ENCODE measurements at regions of chr11 and their contacts with region 1.

Region 1: GRCh38 chr11:15923183-15923582 is 433.2 kb downstream of the SOX6 start:
- DNase-seq: peak; percentile 44
- H3K4me3 ChIP-seq: no peak overlapping the region
- H3K27ac ChIP-seq: no peak overlapping the region
- H3K4me1 ChIP-seq: peaks cover 0 to 4% of the 10 kb centered on the region in 2 experiments; a peak in 1 of 4 replicates
- H3K27me3 ChIP-seq: no peaks in the 10 kb centered on the region
- CTCF ChIP-seq: no peak
- EP300 ChIP-seq: no peak
- RAD21 ChIP-seq: peak; percentile 60

Region 2: DNA sequence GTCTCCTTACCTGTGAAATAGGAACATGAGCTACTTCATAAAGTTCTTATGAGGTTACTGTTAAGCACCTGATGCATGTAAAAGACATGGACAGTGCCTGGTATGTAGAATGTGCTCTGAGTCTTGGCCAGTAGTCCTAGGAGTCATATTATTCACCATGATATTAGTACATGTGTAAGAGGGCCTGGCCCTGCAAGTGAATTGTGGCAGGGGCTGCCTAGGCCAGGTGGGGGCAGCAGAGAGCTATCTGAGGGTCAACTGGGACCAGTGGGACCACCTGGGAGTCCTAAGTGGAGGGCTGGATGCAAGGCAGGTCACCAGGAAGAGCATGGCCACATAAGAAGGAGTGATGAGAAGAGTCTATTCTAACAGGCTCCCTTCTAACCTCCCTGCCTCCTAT is 96.4 kb before region 1 on chr11:
- CTCF ChIA-PET with region 1: interaction called, 14 read pairs
- POLR2A ChIA-PET with region 1: no interaction called
- DNase-seq: peak; percentile 63
- H3K4me3 ChIP-seq: no peak overlapping the region
- H3K27ac ChIP-seq: no peak overlapping the region; a peak in 1 of 4 replicates
- H3K4me1 ChIP-seq: peaks cover 0 to 11% of the 10 kb centered on the region in 2 experiments; a peak in 1 of 4 replicates
- H3K27me3 ChIP-seq: no peaks in the 10 kb centered on the region; the same call in 1 of the 2 replicates
- CTCF ChIP-seq: peak; percentile 61
- EP300 ChIP-seq: no peak
- RAD21 ChIP-seq: peak; percentile 86

Region 3: GRCh38 chr11:15911377-15912044 is 11.7 kb before region 1 on chr11:
- CTCF ChIA-PET with region 1: interaction called, 10 read pairs
- POLR2A ChIA-PET with region 1: no interaction called
- DNase-seq: no peak
- H3K4me3 ChIP-seq: no peak overlapping the region
- H3K27ac ChIP-seq: no peak overlapping the region
- H3K4me1 ChIP-seq: peaks cover 0 to 8% of the 10 kb centered on the region in 2 experiments; a peak in 1 of 4 replicates
- H3K27me3 ChIP-seq: no peaks in the 10 kb centered on the region
- CTCF ChIP-seq: no peak
- EP300 ChIP-seq: no peak
- RAD21 ChIP-seq: no peak

Region 4: GRCh38 chr11:16001899-16002426 is 78.8 kb after region 1 on chr11:
- CTCF ChIA-PET with region 1: no interaction called
- POLR2A ChIA-PET with region 1: no interaction called
- DNase-seq: no peak
- H3K4me3 ChIP-seq: 0 out of 4 replicates have a peak overlapping the region, but pooled peaks of 1 of the 2 experiments have one; percentile 14
- H3K27ac ChIP-seq: peak overlapping the region in 1 of 2 experiments; percentile 14; a peak in 2 of 4 replicates
- H3K4me1 ChIP-seq: peaks cover 0 to 16% of the 10 kb centered on the region in 2 experiments; a peak in 1 of 4 replicates
- H3K27me3 ChIP-seq: no peaks in the 10 kb centered on the region
- CTCF ChIP-seq: no peak
- EP300 ChIP-seq: no peak
- RAD21 ChIP-seq: no peak

Region 5: DNA sequence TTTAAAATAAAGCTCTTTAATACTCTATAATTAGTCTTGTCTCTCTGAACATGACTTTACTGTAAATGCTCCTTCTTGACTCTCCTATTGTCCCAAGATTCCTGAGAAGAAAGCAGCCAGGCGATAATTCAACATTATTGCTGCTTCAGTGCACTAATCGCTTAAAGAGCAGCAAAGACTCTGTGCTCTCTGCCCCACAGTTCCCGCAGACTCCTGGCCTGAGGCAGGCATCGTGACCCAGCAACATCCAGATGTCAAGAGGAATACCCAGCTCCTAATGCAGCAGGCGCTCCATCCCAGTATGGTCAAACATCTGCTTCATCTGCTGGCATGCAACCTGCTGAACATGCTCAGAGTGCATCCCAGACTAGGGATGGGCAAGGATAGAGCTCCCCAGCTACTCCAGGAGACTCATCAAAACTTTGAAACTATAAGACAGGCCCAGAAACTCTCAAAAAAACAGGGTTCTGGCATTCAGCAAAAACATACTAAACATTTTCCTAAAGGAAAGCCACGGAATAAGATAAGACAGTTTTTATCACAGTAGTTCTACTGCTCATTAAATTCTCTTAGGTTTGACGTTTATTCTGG is 163.1 kb after region 1 on chr11:
- CTCF ChIA-PET with region 1: no interaction called
- POLR2A ChIA-PET with region 1: no interaction called
- DNase-seq: peak; percentile 52
- H3K4me3 ChIP-seq: no peak overlapping the region
- H3K27ac ChIP-seq: no peak overlapping the region
- H3K4me1 ChIP-seq: peaks cover 0 to 6% of the 10 kb centered on the region in 2 experiments; a peak in 3 of 4 replicates
- H3K27me3 ChIP-seq: no peaks in the 10 kb centered on the region
- CTCF ChIP-seq: no peak
- EP300 ChIP-seq: peak in 1 of 2 experiments; percentile 29; a peak in 1 of 4 replicates
- RAD21 ChIP-seq: no peak

Measured in SK-N-SH (cell line).